Natural killer cell (primary cell): ENCODE measurements at regions of chr5 and their contacts with region 1.

Region 1: GRCh38 chr5:83503662-83504061 is 32.1 kb downstream of the VCAN start:
- DNase-seq: no peak
- ATAC-seq: no peak
- H3K4me3 ChIP-seq: no peak overlapping the region
- H3K4me3 Mint-ChIP-seq: no peak overlapping the region
- H3K27ac ChIP-seq: no peak overlapping the region
- H3K27ac Mint-ChIP-seq: no peak overlapping the region
- H3K4me1 ChIP-seq: no peaks in the 10 kb centered on the region
- H3K4me1 Mint-ChIP-seq: no peaks in the 10 kb centered on the region
- H3K27me3 ChIP-seq: no peaks in the 10 kb centered on the region
- H3K27me3 Mint-ChIP-seq: peaks cover 0 to 3% of the 10 kb centered on the region in 2 donors
- CTCF ChIP-seq: no peak

Region 2: GRCh38 chr5:83469075-83469474 is 34.6 kb before region 1 on chr5:
- intact Hi-C with region 1: loop called (anchors 1 kb)
- DNase-seq: no peak
- ATAC-seq: no peak
- H3K4me3 ChIP-seq: no peak overlapping the region
- H3K4me3 Mint-ChIP-seq: no peak overlapping the region
- H3K27ac ChIP-seq: no peak overlapping the region
- H3K27ac Mint-ChIP-seq: no peak overlapping the region
- H3K4me1 ChIP-seq: peaks cover 24% of the 10 kb centered on the region
- H3K4me1 Mint-ChIP-seq: peaks cover 21 to 22% of the 10 kb centered on the region in 2 donors
- H3K27me3 ChIP-seq: peaks cover 37% of the 10 kb centered on the region
- H3K27me3 Mint-ChIP-seq: peaks cover 31 to 63% of the 10 kb centered on the region in 2 donors
- CTCF ChIP-seq: no peak

Region 3: GRCh38 chr5:83712001-83712601 is 208.4 kb after region 1 on chr5:
- intact Hi-C with region 1: no loop called
- DNase-seq: peak in 1 of 2 donors; percentile 50
- ATAC-seq: peak in 1 of 3 donors; percentile 48
- H3K4me3 ChIP-seq: no peak overlapping the region
- H3K4me3 Mint-ChIP-seq: no peak overlapping the region
- H3K27ac ChIP-seq: no peak overlapping the region
- H3K27ac Mint-ChIP-seq: no peak overlapping the region
- H3K4me1 ChIP-seq: no peaks in the 10 kb centered on the region
- H3K4me1 Mint-ChIP-seq: no peaks in the 10 kb centered on the region
- H3K27me3 ChIP-seq: no peaks in the 10 kb centered on the region
- H3K27me3 Mint-ChIP-seq: peaks cover 0 to 3% of the 10 kb centered on the region in 2 donors
- CTCF ChIP-seq: peak; percentile 74